Psoas muscle (tissue), 8 donors: ENCODE measurements at regions of chr17 and their contacts with region 1.

Region 1: GRCh38 chr17:66906321-66907278 is 57.9 kb upstream of the CACNG4 start:
- DNase-seq: peak; percentile 74 to 86
- ATAC-seq: peak; percentile 70 to 86 (median 74)
- H3K4me3 ChIP-seq: no peak overlapping the region
- H3K27ac ChIP-seq: no peak overlapping the region
- H3K4me1 ChIP-seq: no peaks in the 10 kb centered on the region
- H3K27me3 ChIP-seq: no peaks in the 10 kb centered on the region
- CTCF ChIP-seq: peak; percentile 92

Region 2: GRCh38 chr17:66715745-66716156 is 190.8 kb before region 1 on chr17:
- intact Hi-C with region 1: loop called (anchors 1 to 2 kb)
- DNase-seq: no peak
- ATAC-seq: peak; percentile 65 to 88 (median 72)
- H3K4me3 ChIP-seq: no peak overlapping the region
- H3K27ac ChIP-seq: no peak overlapping the region
- H3K4me1 ChIP-seq: peaks cover 9% of the 10 kb centered on the region
- H3K27me3 ChIP-seq: no peaks in the 10 kb centered on the region
- CTCF ChIP-seq: peak; percentile 71

Region 3: DNA sequence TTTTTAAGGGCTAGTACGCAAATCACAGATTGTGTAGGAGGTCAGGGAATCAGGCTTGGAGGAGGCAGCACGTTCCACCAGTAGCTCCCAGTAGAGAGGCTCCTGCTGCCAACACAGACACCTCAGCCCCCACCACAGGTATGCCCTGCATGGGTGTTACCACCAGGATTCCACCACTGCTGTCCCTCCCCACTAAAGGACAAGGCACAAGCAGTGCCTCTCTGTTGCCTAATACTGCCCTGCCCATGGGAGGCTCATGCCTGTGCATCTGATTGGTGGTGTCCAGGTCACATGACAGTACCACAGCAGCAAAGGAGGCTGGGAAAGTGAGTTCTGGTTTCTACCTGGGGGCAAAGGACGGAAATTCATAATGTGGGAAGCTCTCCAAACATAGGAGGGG is 24.3 kb after region 1 on chr17:
- intact Hi-C with region 1: no loop called
- DNase-seq: no peak
- ATAC-seq: peak in 3 of 4 donors; percentile 51 to 69 (median 69)
- H3K4me3 ChIP-seq: no peak overlapping the region
- H3K27ac ChIP-seq: no peak overlapping the region
- H3K4me1 ChIP-seq: no peaks in the 10 kb centered on the region
- H3K27me3 ChIP-seq: no peaks in the 10 kb centered on the region
- CTCF ChIP-seq: no peak

Region 4: DNA sequence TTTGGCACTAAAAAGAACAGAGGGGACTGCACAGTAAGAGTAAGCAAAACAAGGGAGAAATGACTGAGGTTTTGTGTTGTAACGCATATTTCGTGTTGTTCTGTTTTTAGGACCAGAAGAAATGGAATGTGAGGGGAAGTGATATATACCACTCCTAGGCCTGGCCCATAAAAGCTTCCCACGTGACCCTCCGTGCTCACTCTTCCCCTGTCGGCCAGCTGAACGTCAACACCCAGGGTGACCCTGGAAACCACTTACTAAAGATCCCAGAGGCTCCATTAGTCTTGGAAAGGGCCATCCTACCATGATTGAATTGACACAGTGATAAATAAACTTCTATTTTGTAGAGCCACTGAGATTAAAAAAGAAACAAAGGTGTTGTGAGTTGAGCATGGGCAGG is 258.6 kb after region 1 on chr17:
- intact Hi-C with region 1: loop called in 1 of 2 experiments (anchors 5 kb)
- DNase-seq: peak in 1 of 2 donors; percentile 19
- ATAC-seq: peak; percentile 32 to 65 (median 64)
- H3K4me3 ChIP-seq: no peak overlapping the region
- H3K27ac ChIP-seq: no peak overlapping the region
- H3K4me1 ChIP-seq: peaks cover 12% of the 10 kb centered on the region
- H3K27me3 ChIP-seq: no peaks in the 10 kb centered on the region
- CTCF ChIP-seq: no peak